Gastrocnemius medialis (tissue), 4 donors: ENCODE measurements at regions of chr9 and their contacts with region 1.

Region 1: GRCh38 chr9:97921959-97922724 is at the start of gene TRMO:
- DNase-seq: peak; percentile 93 to 97
- ATAC-seq: peak; percentile 94 to 97
- H3K4me3 ChIP-seq: peak within 1 kb of the TSS; percentile 66 to 85 (median 68)
- H3K27ac ChIP-seq: peak within 1 kb of the TSS; percentile 90 to 98 (median 94)
- H3K4me1 ChIP-seq: peaks cover 17 to 34% of the 10 kb centered on the region in 2 donors
- H3K27me3 ChIP-seq: peaks cover 0 to 4% (median 0%) of the 10 kb centered on the region in 3 donors
- CTCF ChIP-seq: peak; percentile 55 to 86 (median 76)
- POLR2A ChIP-seq: peak; percentile 75 to 81
- total RNA-seq, gene TRMO: 10.5 to 23.4 (median 15.7) TPM

Region 2: DNA sequence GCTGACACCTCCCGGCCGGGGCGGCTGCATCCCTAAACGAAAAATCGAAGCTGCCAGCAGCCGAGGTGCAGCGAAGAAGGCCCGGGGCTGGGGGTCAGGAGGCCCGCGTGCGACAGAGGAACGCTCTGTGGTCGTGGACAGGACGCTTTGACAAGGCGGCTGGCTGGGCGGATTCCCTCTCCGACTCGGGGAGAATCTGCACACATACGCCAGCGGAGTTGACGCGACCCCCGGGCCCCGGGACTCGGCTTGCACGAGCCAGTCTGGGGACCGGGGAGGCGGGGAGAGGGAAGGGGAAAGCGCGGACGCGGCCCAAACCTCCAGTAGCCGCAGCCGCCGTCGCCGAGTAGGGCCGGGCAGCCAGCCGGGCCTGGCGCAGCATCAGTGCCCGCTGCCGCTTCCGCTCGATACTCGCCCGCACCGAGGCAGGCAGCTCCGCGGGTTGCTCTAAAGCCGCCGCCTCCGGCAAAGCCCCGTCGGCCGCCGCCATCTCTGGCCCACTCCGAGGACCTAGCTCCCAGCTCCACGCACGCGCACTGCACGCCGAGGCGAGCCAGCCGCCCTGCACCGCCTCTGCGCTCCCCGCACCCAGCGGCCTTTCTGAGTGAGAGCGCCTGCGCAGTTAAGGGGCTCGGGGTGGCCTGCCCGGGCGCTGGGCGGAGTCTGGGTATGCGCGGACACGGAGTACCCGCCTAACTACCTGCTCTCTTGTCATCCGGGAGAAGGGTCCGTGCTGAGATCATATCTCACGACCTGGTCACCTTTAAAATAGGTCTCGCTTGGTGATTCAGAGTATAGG is 225.1 kb before region 1 on chr9 and contains the start of gene XPA:
- in situ Hi-C with region 1: no loop called
- intact Hi-C with region 1: loop called (anchors 2 kb)
- DNase-seq: peak; percentile 93 to 96
- ATAC-seq: peak; percentile 93 to 95
- H3K4me3 ChIP-seq: peak within 1 kb of the TSS; percentile 81 to 100 (median 92)
- H3K27ac ChIP-seq: peak within 1 kb of the TSS; percentile 93 to 98 (median 94)
- H3K4me1 ChIP-seq: peaks cover 21 to 38% of the 10 kb centered on the region in 2 donors
- H3K27me3 ChIP-seq: no peaks in the 10 kb centered on the region
- CTCF ChIP-seq: peak in 2 of 5 experiments; percentile 2 to 13
- POLR2A ChIP-seq: peak; percentile 91 to 92
- total RNA-seq, gene XPA: 4.8 to 14.8 (median 9.7) TPM

Region 3: GRCh38 chr9:98034593-98035546 is 112.7 kb after region 1 on chr9:
- in situ Hi-C with region 1: loop called in 3 of 4 experiments (anchors 10 to 25 kb)
- intact Hi-C with region 1: loop called (anchors 1 kb)
- DNase-seq: peak; percentile 69 to 82
- ATAC-seq: peak; percentile 45 to 61
- H3K4me3 ChIP-seq: peak overlapping the region in 1 of 4 donors; percentile 26
- H3K27ac ChIP-seq: peak overlapping the region; percentile 75 to 80 (median 80)
- H3K4me1 ChIP-seq: peaks cover 36 to 39% of the 10 kb centered on the region in 2 donors
- H3K27me3 ChIP-seq: no peaks in the 10 kb centered on the region
- CTCF ChIP-seq: peak; percentile 78 to 83 (median 81)
- POLR2A ChIP-seq: no peak

Region 4: DNA sequence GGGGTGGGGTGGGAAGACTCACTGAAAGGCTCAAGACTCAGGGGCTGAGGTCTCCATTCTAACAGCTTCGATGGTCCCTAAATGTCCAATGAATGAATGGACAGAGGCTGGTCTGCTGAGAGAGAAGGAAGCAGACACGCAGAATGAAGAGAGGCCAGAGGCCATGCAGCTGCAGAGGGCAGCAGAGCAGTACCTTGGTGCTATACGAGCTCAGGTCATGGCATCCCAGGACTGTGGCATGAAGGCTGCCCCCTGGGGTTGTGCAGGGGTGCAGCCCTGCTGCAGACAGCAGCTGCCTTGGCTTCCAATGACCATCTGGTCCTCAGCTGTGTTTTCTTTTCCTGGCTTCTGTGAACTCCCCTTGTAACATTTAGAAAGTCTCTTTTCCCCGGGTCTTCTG is 285.5 kb after region 1 on chr9:
- in situ Hi-C with region 1: no loop called
- intact Hi-C with region 1: loop called (anchors 5 kb)
- DNase-seq: no peak
- ATAC-seq: no peak
- H3K4me3 ChIP-seq: no peak overlapping the region
- H3K27ac ChIP-seq: no peak overlapping the region
- H3K4me1 ChIP-seq: no peaks in the 10 kb centered on the region
- H3K27me3 ChIP-seq: no peaks in the 10 kb centered on the region
- CTCF ChIP-seq: no peak
- POLR2A ChIP-seq: no peak

Region 5: DNA sequence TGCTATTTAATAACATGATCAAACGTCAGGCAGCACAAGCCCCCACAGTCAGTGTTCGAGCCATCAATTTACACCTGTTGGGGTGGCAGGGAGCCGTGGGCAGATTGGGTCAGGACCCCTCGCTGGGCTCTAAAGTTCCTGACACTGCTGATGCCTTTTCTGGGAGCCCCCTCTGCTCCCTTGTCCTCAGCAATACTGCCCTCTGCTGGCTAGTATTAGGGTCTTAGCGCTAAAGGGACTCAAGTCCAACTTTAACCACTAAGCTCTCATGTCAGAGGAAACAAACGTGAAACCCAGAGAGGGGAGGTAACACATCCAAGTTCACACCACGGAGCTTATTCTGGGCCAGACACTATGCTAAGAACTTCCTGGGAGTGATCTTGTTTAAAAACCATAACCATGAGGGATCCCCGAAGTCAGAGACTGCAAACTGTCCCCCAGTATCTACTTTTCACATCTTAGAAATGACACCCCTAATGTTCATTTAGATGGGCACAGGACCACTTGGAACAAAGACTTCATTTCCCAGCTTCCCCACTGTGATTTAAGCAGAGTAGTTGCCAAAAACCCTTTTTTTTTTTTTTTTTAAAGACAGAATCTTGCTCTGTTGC is 853.8 kb after region 1 on chr9:
- in situ Hi-C with region 1: loop called in 1 of 4 experiments (anchors 25 kb)
- intact Hi-C with region 1: loop called (anchors 10 kb)
- DNase-seq: no peak
- ATAC-seq: peak in 1 of 2 donors; percentile 53
- H3K4me3 ChIP-seq: no peak overlapping the region
- H3K27ac ChIP-seq: no peak overlapping the region
- H3K4me1 ChIP-seq: no peaks in the 10 kb centered on the region
- H3K27me3 ChIP-seq: no peaks in the 10 kb centered on the region
- CTCF ChIP-seq: peak in 4 of 5 experiments; percentile 15 to 59 (median 46)
- POLR2A ChIP-seq: no peak